Activated CD4-positive, alpha-beta memory T cell treated with anti-CD3 and anti-CD28 coated beads for 36 hours (primary cell): ENCODE measurements at regions of chr10 and their contacts with region 1.

Region 1: GRCh38 chr10:73940634-73941221 is 29.8 kb downstream of the PLAU start:
- DNase-seq: peak; percentile 89
- H3K4me3 Mint-ChIP-seq: peak overlapping the region; percentile 40
- H3K27ac Mint-ChIP-seq: no peak overlapping the region
- H3K4me1 Mint-ChIP-seq: peaks cover 8% of the 10 kb centered on the region
- H3K27me3 Mint-ChIP-seq: no peaks in the 10 kb centered on the region

Region 2: DNA sequence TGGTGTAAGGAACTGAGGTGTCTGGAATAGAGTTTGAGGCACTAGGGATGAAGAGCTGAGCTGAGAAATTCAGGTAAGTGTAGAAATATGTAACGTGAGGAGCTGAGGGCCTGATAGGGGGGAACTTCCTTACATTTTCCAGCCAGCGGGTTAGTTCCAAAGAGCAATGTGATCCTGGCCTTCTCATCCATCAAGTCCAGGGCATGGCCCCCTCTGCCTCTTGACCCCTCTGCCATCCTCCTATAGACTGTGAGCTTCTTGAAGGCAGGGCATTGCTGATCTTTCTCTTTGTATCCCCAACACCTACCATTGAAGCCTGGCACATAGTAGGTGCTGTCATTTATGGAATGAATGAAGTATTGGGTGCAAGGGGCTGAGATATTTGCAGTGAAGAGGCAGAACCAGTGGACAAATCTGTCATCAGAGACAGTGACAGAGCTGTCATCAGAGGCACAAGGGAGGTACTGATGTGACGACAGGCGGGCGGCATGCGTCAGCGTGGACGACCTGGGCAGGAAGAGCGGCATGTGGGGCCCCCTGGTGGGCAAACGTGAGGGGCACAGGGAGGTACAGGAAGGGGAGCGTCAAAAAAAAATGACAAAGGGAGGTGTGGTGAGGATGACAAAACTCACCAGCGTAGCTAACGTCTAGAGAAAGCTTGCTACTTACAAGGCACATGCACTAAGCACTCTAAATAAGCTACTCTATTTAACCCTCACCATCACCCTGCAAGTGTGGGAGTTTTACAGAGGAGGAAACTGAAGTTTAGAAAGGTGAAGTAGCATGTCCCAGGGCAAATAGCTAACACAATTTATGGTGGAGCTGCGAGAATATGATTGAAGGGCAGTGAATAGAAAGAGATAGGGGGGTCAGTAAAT is 61.2 kb before region 1 on chr10:
- CTCF ChIA-PET with region 1: interaction called, 148 read pairs
- POLR2A ChIA-PET with region 1: interaction called, 3 read pairs
- intact Hi-C with region 1: no loop called
- DNase-seq: peak; percentile 97
- H3K4me3 Mint-ChIP-seq: peak overlapping the region; percentile 6
- H3K27ac Mint-ChIP-seq: no peak overlapping the region
- H3K4me1 Mint-ChIP-seq: peaks cover 27% of the 10 kb centered on the region
- H3K27me3 Mint-ChIP-seq: no peaks in the 10 kb centered on the region

Region 3: DNA sequence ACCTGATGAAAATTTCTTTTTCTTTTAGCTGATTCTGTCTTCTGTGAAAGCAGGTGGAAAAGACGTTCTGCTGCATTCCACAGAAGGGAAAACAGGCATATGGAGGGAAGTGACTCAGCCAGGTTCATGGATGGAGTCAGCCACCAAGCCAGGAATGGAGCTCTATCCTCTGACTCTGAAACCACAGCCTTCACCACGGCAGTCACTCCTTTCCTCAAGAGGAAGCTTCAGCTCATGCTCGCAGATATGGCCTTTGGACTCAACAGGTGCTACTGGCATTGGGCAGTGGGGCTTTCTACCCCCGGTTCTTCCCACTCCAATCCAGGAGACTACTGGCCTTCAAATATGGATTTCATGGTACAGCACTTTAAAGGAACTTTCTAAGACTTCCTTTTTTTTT is 41.3 kb before region 1 on chr10:
- CTCF ChIA-PET with region 1: interaction called, 383 read pairs
- POLR2A ChIA-PET with region 1: no interaction called
- intact Hi-C with region 1: no loop called
- DNase-seq: no peak
- H3K4me3 Mint-ChIP-seq: no peak overlapping the region
- H3K27ac Mint-ChIP-seq: no peak overlapping the region
- H3K4me1 Mint-ChIP-seq: peaks cover 7% of the 10 kb centered on the region
- H3K27me3 Mint-ChIP-seq: no peaks in the 10 kb centered on the region

Region 4: DNA sequence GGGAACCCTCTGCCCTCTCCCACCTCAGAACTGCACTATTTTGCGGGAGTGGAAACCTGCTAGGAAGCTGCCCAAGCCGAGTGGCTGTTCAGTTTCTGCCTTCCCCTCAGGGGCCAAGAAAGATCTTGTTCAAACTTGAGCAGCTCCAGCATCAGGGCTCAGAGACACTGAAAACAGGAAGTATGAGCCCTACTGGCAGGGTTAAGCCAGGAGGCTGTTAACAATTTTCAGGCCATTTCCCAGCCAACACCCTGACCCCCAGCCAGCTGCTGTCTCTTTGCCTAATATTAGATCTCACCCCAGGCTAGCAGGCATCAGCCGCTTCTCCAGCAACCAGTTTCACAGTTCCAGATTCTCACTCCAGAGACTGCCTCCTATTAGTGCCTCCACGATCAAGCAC is 20.6 kb before region 1 on chr10:
- CTCF ChIA-PET with region 1: interaction called, 20 read pairs
- POLR2A ChIA-PET with region 1: no interaction called
- intact Hi-C with region 1: no loop called
- DNase-seq: no peak
- H3K4me3 Mint-ChIP-seq: no peak overlapping the region
- H3K27ac Mint-ChIP-seq: no peak overlapping the region
- H3K4me1 Mint-ChIP-seq: peaks cover 26% of the 10 kb centered on the region
- H3K27me3 Mint-ChIP-seq: peaks cover 18% of the 10 kb centered on the region

Region 5: DNA sequence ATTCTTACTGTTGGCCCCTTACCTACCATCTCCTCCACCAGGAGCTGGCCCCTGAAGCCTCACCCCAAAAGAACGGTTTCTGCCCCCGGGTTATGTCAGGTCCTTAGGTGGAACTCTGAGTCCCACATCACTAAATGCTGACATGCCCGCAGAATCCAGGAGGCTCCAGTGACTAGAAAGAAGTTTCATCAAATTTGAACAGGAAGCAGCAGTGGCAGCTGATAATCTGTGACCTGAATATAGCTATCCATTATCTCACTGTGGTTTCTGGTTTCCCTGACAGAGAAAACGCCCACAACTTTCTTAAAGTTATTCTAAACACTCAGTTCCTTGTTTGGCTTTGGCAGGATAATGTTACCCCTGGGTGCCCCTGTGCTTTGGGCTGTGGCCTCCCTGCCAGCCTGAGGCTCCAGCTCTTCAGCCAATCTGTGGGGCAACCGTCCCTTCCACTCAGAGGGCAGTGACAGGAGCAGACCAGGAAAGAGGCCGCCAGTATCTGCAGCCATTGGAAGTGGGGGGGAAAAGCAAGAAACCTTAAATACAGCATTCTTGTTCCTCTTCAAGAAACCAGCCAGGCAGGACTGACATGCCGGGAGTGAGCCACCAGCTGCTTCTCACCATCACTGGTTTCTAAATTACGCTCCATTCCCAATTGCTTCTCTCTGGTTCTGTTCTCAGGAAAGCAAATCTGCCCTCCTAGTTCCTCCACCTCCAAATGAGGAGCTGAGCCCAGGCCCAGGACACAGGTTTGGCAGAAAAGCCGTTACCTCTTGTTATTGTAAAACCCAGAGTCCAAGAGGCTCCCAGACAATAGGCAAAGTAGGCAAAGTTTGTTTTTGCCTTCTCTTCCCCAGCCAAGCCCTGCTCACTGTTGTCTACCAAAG is 16.0 kb after region 1 on chr10:
- CTCF ChIA-PET with region 1: interaction called, 27 read pairs
- POLR2A ChIA-PET with region 1: interaction called, 3 read pairs
- intact Hi-C with region 1: no loop called
- DNase-seq: peak; percentile 53
- H3K4me3 Mint-ChIP-seq: peak overlapping the region; percentile 26
- H3K27ac Mint-ChIP-seq: peak overlapping the region; percentile 85
- H3K4me1 Mint-ChIP-seq: peaks cover 49% of the 10 kb centered on the region
- H3K27me3 Mint-ChIP-seq: no peaks in the 10 kb centered on the region

Region 6: DNA sequence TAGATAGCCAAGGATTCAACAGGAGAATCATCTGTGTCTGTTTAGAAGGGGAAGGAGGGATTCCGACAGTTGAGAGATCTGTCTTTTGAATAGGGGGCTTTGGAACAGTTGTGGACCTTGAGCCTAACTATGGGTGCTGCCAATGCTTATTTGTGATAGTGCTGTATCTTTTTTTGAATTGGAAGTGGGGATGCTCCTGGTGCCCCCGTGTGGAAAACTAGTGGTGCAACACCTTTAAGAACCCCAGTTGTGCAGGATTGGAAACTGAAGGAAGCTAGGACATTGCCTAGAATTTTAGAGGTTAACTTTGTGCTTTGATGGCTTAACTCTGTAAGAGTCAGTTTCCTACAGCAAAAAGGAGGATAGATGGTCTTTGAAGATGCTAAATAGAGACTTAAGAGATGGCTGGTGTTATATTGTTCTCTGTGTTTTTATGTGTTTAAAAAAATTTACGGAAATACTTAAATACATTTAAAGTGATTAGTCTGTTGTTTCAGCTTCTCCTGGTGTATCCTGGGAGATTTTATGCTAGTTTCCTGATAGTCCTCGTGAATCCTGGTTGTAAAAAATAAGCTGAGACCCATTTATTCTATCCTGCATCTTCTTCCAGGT is 140.6 kb after region 1 on chr10:
- CTCF ChIA-PET with region 1: interaction called, 43 read pairs
- POLR2A ChIA-PET with region 1: no interaction called
- intact Hi-C with region 1: no loop called
- DNase-seq: peak; percentile 58
- H3K4me3 Mint-ChIP-seq: no peak overlapping the region
- H3K27ac Mint-ChIP-seq: no peak overlapping the region
- H3K4me1 Mint-ChIP-seq: peaks cover 45% of the 10 kb centered on the region
- H3K27me3 Mint-ChIP-seq: no peaks in the 10 kb centered on the region

Region 7: DNA sequence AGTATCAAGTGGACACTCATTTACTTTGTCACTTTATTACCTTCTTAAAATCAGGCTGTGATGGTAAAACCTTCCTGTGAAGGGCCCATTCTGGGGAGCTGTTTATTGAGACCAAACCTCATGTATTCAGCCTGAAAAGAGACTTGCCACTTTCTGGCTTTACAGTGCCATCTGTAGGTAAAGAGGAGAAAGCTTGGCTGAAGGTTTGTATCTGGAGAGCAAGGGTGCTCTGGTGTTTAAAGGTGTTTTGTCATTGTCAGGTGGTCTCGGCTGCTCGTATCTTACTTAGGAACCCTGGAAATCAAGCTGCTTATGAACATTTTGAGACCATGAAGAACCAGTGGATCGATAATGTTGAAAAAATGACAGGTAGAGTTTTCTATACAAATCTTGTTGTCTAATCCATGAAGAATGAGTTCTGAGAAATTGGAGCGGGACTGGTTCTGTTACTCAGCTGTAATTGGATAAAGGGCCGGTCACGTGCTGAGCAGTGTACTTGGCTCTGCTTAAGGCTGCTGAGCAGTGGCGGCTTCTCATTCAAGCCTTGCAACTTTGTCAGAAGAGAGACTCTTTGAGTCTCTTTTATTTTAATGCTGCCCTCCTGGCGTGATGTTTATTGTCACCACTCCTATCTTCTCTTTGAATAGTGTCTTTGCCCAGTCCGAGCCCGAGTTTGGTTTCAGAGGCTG is 163.0 kb after region 1 on chr10:
- CTCF ChIA-PET with region 1: interaction called, 12 read pairs
- POLR2A ChIA-PET with region 1: no interaction called
- intact Hi-C with region 1: no loop called
- DNase-seq: no peak
- H3K4me3 Mint-ChIP-seq: no peak overlapping the region
- H3K27ac Mint-ChIP-seq: no peak overlapping the region
- H3K4me1 Mint-ChIP-seq: no peaks in the 10 kb centered on the region
- H3K27me3 Mint-ChIP-seq: no peaks in the 10 kb centered on the region